ENCODE measurements at regions of chr17 and their contacts with region 1.

Region 1: DNA sequence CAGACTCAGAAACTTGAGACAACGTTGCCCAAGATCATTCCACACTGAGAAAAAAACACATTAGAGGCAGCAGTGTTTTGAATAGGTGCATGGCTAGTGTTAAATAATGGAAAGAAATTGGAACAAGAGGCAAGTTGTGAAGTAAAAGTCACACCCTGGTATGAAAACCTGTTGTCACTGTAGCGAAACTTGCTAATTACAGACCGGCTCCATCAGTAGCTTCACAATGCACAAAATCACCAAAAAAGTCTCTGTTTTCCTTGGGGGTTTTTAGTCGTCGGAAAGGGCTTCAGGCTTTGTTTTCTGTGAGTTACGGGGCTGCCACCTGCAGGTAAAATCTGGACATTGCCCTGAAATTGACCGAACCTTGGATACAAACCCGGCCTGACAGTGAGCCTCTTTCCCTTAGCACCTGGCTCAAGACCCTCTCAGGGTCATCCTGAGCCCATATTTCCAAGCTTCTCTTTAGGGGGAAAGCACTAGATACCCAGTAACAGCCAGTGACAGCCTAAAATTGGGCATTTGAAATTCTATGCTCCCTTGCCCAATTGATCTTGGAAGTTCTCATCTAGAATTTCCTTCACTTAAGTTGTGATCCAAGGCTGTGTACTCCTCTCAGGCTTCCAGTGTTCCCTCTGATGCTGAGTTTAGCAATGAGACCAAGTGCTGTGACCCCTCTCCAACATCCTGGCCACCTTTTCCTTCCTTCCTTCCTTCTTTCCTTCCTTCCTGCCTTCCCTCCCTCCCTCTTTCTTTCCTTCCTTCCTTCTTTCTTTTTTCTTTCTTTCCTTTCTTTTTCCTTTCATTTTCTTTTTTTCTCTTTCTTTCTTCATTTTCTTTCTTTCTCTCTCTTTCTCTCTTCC is 7.2 kb upstream of the GRB2 start:
- DNase-seq: peak; percentile 93
- H3K4me3 ChIP-seq: peak overlapping the region; percentile 14 to 45 (median 25)
- H3K27ac ChIP-seq: no peak overlapping the region
- H3K4me1 ChIP-seq: peaks cover 9 to 15% (median 12%) of the 10 kb centered on the region in 4 donors
- H3K27me3 ChIP-seq: no peaks in the 10 kb centered on the region
- CTCF ChIP-seq: peak; percentile 80 to 92 (median 88)
- EP300 ChIP-seq: no peak
- POLR2A ChIP-seq: no peak

Region 2: GRCh38 chr17:75059369-75060345 is 353.0 kb before region 1 on chr17:
- intact Hi-C with region 1: no loop called
- DNase-seq: no peak
- H3K4me3 ChIP-seq: no peak overlapping the region
- H3K27ac ChIP-seq: peak overlapping the region; percentile 69 to 85 (median 76)
- H3K4me1 ChIP-seq: peaks cover 10 to 18% (median 16%) of the 10 kb centered on the region in 4 donors
- H3K27me3 ChIP-seq: no peaks in the 10 kb centered on the region
- CTCF ChIP-seq: peak; percentile 46 to 63 (median 50)
- EP300 ChIP-seq: no peak
- POLR2A ChIP-seq: no peak

Region 3: DNA sequence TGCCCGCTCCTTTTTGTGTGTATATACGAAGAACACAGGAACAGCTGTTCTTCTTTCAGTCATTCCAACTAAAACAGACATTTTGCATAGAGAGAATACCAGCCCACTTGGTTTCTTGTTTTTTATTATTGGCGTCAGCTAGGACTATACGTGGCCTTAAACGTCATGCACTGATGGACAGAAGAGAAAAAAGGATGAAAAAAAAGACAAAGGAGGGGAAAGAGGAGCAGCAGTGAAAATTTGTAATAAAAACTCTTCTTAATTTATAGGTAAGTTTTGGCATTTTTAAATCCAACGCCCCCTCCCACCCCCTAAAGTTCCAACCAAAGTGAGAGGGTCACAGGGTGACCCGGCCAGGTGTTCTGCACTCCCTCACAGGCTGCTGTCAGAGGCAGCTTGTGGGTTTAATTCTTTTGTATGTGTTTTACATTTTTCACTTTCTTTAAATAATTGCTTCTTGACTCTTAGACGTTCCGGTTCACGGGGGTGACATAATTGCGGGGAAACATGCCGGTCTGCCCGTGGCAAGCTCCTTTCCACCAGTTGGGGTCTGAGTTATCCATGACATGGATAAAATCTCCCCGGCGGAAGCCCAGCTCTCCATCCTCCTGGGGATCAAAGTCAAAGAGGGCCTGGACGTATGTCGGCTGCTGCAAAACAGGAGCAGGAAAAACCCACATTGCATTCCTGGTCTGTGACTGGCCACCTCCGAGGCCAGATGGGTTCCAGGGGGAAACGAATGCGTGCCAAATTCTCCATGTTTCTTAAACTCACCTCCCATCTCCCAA is 92.6 kb before region 1 on chr17:
- intact Hi-C with region 1: loop called (anchors 1 kb)
- DNase-seq: no peak
- H3K4me3 ChIP-seq: no peak overlapping the region
- H3K27ac ChIP-seq: peak overlapping the region in 1 of 4 donors; percentile 27
- H3K4me1 ChIP-seq: peaks cover 6 to 19% (median 15%) of the 10 kb centered on the region in 4 donors
- H3K27me3 ChIP-seq: no peaks in the 10 kb centered on the region
- CTCF ChIP-seq: no peak
- EP300 ChIP-seq: no peak
- POLR2A ChIP-seq: no peak

Region 4: GRCh38 chr17:75338335-75338734 is 74.4 kb before region 1 on chr17:
- intact Hi-C with region 1: no loop called
- DNase-seq: no peak
- H3K4me3 ChIP-seq: no peak overlapping the region
- H3K27ac ChIP-seq: no peak overlapping the region
- H3K4me1 ChIP-seq: peaks cover 3 to 42% (median 36%) of the 10 kb centered on the region in 4 donors
- H3K27me3 ChIP-seq: no peaks in the 10 kb centered on the region
- CTCF ChIP-seq: no peak
- EP300 ChIP-seq: no peak
- POLR2A ChIP-seq: no peak

Region 5: GRCh38 chr17:75779231-75779986 is 366.7 kb after region 1 on chr17:
- intact Hi-C with region 1: no loop called
- DNase-seq: peak; percentile 100
- H3K4me3 ChIP-seq: peak overlapping the region; percentile 80 to 97 (median 94)
- H3K27ac ChIP-seq: peak overlapping the region; percentile 98 to 100 (median 100)
- H3K4me1 ChIP-seq: peaks cover 32 to 59% (median 52%) of the 10 kb centered on the region in 4 donors
- H3K27me3 ChIP-seq: no peaks in the 10 kb centered on the region
- CTCF ChIP-seq: no peak
- EP300 ChIP-seq: peak; percentile 91
- POLR2A ChIP-seq: peak; percentile 100